HEK293 (cell line): ENCODE measurements at regions of chr22 and their contacts with region 1.

Region 1: DNA sequence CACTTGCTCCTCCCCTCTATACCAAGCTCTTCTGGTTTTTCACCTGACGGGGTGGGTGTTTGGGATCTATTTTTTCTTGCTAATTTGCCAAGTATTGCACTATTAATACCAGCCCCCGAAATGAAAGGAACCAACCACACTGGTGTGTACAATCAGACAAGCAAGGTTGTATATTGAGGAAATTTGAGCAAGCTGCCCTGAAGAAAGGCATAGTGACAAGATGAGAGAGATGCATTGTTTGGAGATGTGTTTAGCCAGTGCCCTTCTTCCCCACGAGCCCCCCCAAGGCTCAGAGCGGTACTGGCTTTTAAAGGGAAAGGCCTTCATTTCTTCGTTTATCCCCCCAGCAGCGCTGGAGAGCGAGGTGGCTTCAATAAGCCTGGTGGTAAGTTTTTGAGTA is 15.2 kb upstream of the GAS2L1 start:
- H3K4me3 ChIP-seq: no peak overlapping the region
- H3K27ac ChIP-seq: no peak overlapping the region
- H3K4me1 ChIP-seq: no peaks in the 10 kb centered on the region
- CTCF ChIP-seq: no peak

Region 2: GRCh38 chr22:29154364-29155048 is 136.7 kb before region 1 on chr22:
- CTCF ChIA-PET with region 1: no interaction called
- POLR2A ChIA-PET with region 1: no interaction called
- H3K4me3 ChIP-seq: no peak overlapping the region
- H3K27ac ChIP-seq: no peak overlapping the region
- H3K4me1 ChIP-seq: no peaks in the 10 kb centered on the region
- CTCF ChIP-seq: peak; percentile 95

Region 3: DNA sequence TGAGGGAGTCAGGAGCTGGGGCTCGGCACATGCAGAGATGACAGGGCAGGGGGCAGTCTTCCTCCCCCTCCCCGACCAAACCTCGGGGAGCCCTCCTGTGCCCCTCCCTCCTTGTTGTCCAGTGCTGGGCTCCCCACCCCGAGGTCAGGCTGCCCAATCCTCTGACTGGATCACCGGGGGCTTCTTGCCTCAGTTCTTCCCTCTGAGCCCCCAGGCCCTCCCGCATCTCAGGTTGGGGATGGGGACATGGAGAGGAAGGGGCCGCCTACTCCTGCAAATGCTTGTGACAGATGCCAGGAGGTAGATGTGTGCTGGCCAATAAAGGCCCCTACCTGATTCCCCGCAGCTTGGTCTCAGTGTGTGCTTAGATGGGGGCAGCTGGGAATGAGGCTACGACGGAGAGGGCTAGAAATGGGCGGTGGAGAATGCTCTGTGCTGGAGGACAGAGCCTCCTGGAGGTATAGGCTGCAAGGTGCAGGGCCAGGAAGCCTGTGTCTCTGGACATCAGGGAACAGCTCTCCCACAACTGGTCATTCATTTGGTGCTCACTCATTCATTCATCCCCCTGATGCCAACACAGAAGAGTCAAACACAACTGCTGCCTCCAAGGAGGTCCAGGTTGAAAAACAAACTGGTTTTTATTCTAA is 31.8 kb before region 1 on chr22:
- CTCF ChIA-PET with region 1: no interaction called
- POLR2A ChIA-PET with region 1: no interaction called
- H3K4me3 ChIP-seq: no peak overlapping the region
- H3K27ac ChIP-seq: peak overlapping the region; percentile 31; the same call in 1 of the 2 replicates
- H3K4me1 ChIP-seq: no peaks in the 10 kb centered on the region
- CTCF ChIP-seq: no peak; the same call in 1 of the 2 replicates

Region 4: GRCh38 chr22:29275819-29276565 is 15.2 kb before region 1 on chr22:
- CTCF ChIA-PET with region 1: interaction called, 6 read pairs
- POLR2A ChIA-PET with region 1: interaction called, 12 read pairs
- H3K4me3 ChIP-seq: no peak overlapping the region
- H3K27ac ChIP-seq: peak overlapping the region; percentile 14; the same call in 1 of the 2 replicates
- H3K4me1 ChIP-seq: peaks cover 3% of the 10 kb centered on the region
- CTCF ChIP-seq: no peak